Activated CD4-positive, alpha-beta T cell treated with anti-CD3 and anti-CD28 coated beads, Interleukin-2, amount 10 ng/mL, durations not matched to agents 24 days and 14 days (primary cell): ENCODE measurements at regions of chr15 and their contacts with region 1.

Region 1: GRCh38 chr15:50260969-50261496 is 4.5 kb downstream of the HDC start:
- DNase-seq: peak; percentile 61
- H3K4me3 Mint-ChIP-seq: peak overlapping the region; percentile 71
- H3K27ac Mint-ChIP-seq: peak overlapping the region; percentile 95
- H3K4me1 Mint-ChIP-seq: peaks cover 68% of the 10 kb centered on the region
- H3K27me3 Mint-ChIP-seq: no peaks in the 10 kb centered on the region

Region 2: GRCh38 chr15:49286649-49287404 is 974.2 kb before region 1 on chr15:
- intact Hi-C with region 1: loop called (anchors 5 kb)
- DNase-seq: no peak
- H3K4me3 Mint-ChIP-seq: peak overlapping the region; percentile 46
- H3K27ac Mint-ChIP-seq: peak overlapping the region; percentile 85
- H3K4me1 Mint-ChIP-seq: peaks cover 43% of the 10 kb centered on the region
- H3K27me3 Mint-ChIP-seq: no peaks in the 10 kb centered on the region

Region 3: GRCh38 chr15:49918121-49918520 is 342.9 kb before region 1 on chr15:
- intact Hi-C with region 1: no loop called
- DNase-seq: no peak
- H3K4me3 Mint-ChIP-seq: no peak overlapping the region
- H3K27ac Mint-ChIP-seq: no peak overlapping the region
- H3K4me1 Mint-ChIP-seq: peaks cover 2% of the 10 kb centered on the region
- H3K27me3 Mint-ChIP-seq: no peaks in the 10 kb centered on the region

Region 4: DNA sequence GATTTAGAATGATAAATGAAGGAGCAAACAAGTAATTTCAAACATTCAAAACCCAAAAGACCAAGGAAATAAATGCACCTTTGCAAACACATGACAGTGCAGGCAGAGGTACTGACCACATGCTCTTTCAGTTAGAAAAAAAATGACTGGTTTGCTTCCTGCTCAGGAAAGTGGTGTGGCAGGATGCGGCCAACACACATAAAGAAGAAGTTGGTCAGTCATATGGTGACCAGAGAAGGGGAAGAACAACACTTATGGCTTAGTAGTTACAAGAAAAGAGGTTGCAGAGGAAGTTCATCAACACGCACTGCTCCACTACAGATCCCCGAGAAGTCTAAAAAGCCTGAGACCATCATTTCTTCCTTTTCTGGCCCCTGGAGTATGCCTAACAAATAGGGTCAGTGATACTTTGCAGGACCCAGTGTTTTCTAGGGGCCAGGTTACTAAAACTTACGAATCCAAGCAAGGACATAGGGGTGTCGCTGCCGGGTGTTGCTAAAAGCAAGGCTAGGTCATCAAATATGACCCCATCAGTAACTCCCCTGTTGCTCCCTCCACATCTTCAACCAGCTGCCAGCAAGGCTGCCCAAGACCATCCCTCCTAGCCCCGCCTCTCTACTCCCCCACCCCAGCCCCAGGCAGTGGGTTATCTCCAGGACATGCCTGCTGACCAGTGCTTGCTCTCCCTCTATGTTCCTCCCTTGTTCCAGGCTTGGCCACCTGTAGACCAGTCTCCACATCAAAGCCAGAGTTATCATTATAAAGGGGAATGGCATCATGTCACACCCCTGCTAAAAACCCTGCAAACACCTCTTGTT is 153.2 kb before region 1 on chr15:
- intact Hi-C with region 1: loop called (anchors 1 kb)
- DNase-seq: peak; percentile 82
- H3K4me3 Mint-ChIP-seq: peak overlapping the region; percentile 79
- H3K27ac Mint-ChIP-seq: peak overlapping the region; percentile 91
- H3K4me1 Mint-ChIP-seq: peaks cover 67% of the 10 kb centered on the region
- H3K27me3 Mint-ChIP-seq: no peaks in the 10 kb centered on the region

Region 5: GRCh38 chr15:50247819-50248655 is 13.0 kb before region 1 on chr15:
- intact Hi-C with region 1: loop called (anchors 1 kb)
- DNase-seq: peak; percentile 91
- H3K4me3 Mint-ChIP-seq: peak overlapping the region; percentile 81
- H3K27ac Mint-ChIP-seq: peak overlapping the region; percentile 99
- H3K4me1 Mint-ChIP-seq: peaks cover 53% of the 10 kb centered on the region
- H3K27me3 Mint-ChIP-seq: no peaks in the 10 kb centered on the region

Region 6: GRCh38 chr15:50298340-50298739 is 37.3 kb after region 1 on chr15:
- intact Hi-C with region 1: loop called (anchors 5 kb)
- DNase-seq: no peak
- H3K4me3 Mint-ChIP-seq: no peak overlapping the region
- H3K27ac Mint-ChIP-seq: no peak overlapping the region
- H3K4me1 Mint-ChIP-seq: peaks cover 3% of the 10 kb centered on the region
- H3K27me3 Mint-ChIP-seq: no peaks in the 10 kb centered on the region

Region 7: GRCh38 chr15:50765195-50765973 is 504.4 kb after region 1 on chr15 and contains the start of gene SPPL2A:
- intact Hi-C with region 1: loop called (anchors 5 kb)
- DNase-seq: peak; percentile 94
- H3K4me3 Mint-ChIP-seq: peak within 1 kb of the TSS; percentile 92
- H3K27ac Mint-ChIP-seq: peak within 1 kb of the TSS; percentile 97
- H3K4me1 Mint-ChIP-seq: peaks cover 54% of the 10 kb centered on the region
- H3K27me3 Mint-ChIP-seq: no peaks in the 10 kb centered on the region
- total RNA-seq, gene SPPL2A: 85.0 and 86.6 TPM in 2 replicates